H1 (cell line): ENCODE measurements at regions of chr20 and their contacts with region 1.

Region 1: DNA sequence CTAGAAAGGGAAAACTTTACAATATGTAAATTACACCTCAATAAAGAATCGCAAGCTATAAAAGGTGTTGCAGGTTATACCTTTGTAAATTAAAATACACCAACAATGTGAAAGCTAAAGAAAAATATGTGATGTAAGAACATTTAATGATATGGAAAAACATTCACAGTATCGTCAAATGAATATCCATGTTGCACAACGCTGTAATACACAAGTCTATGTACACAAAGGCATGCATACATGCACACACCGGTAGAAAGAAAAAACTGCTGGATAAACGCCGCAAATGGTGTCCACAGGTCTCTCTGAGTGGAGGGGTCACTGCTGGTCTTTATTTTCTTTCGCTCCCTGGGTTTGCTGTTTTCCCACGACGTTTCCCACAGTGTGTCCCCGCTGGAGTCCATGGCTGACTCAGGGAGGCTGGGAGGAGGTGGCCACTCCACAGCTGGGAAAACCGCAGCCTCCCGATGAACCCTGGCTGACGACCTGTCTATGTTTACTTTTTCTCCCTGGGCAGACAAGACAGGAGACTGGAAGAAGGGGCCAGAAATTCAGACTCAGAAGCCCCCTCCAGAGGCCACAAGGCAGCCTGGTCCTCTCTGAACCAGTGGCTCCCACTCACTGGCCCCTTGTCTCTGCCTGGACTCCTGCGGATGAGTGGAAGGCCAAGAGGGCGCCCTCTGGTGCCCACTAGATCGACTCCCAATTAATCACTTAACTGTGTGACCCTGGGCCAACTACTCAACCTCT is 12.9 kb upstream of the BPI start:
- DNase-seq: peak; percentile 49 to 74
- H3K4me3 ChIP-seq: no peak overlapping the region
- H3K27ac ChIP-seq: no peak overlapping the region
- H3K4me1 ChIP-seq: peaks cover 0 to 4% (median 3%) of the 10 kb centered on the region in 4 experiments; a peak in 3 of 7 replicates
- H3K27me3 ChIP-seq: no peaks in the 10 kb centered on the region
- CTCF ChIP-seq: peak; percentile 75 to 94 (median 85)
- EP300 ChIP-seq: no peak
- POLR2A ChIP-seq: no peak
- RAD21 ChIP-seq: peak; percentile 56 to 70

Region 2: GRCh38 chr20:38229376-38230252 is 61.4 kb before region 1 on chr20:
- CTCF ChIA-PET with region 1: interaction called, 14 read pairs
- POLR2A ChIA-PET with region 1: no interaction called
- DNase-seq: peak in 1 of 2 experiments; percentile 53
- H3K4me3 ChIP-seq: no peak overlapping the region
- H3K27ac ChIP-seq: no peak overlapping the region
- H3K4me1 ChIP-seq: no peaks in the 10 kb centered on the region
- H3K27me3 ChIP-seq: no peaks in the 10 kb centered on the region
- CTCF ChIP-seq: peak; percentile 50 to 54 (median 51)
- EP300 ChIP-seq: no peak
- POLR2A ChIP-seq: no peak
- RAD21 ChIP-seq: peak; percentile 43 to 57

Region 3: DNA sequence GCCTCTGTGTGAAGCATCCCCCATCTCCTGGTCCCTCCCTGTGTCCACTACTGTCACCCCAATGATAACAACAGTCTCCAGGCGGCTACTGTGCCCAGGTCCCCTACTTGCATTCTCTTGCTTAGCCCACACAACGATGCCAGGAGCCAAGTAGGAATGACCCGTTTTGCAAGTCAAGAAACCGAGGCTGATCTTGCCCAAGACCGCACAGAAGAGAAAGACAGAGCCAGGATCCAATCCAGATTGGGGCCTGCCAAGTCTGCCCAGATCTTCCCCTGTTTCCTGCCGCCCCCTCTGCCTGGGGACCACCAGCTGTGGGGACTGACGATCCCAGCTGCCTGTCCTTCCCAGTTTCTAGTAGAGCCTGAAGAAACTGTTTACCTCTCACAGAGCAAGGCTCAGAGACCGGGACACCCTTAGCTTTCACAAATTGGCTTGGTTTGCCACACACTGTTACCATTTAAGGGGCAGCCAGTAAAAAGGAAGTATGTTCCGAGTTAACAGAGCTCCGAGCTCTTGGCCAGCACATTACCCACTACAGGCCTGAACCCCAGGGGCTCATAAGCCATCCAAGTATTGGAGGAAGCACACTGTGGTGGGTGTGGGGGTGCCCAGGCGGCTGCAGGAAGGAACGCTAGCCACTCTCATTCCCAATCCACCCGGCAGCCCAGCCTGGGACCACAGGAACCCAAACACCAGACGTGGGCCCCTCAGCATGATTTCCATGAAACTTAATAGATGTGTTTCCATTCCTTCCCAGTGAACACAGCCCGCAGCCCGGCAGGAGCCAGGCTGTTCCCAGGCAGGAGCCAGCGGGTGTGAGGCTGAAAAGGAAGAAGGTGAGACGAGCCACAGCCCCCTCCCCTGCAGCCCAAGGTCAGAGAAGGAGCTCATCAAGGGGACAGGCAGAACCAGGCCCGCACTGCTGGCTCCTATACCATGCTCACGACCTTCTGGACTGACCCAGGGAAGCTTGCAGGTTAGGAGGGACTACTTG is 38.4 kb before region 1 on chr20:
- CTCF ChIA-PET with region 1: interaction called, 11 read pairs
- POLR2A ChIA-PET with region 1: interaction called, 3 read pairs
- DNase-seq: no peak
- H3K4me3 ChIP-seq: no peak overlapping the region
- H3K27ac ChIP-seq: no peak overlapping the region
- H3K4me1 ChIP-seq: peaks cover 0 to 10% (median 4%) of the 10 kb centered on the region in 4 experiments; a peak in 4 of 7 replicates
- H3K27me3 ChIP-seq: no peaks in the 10 kb centered on the region
- CTCF ChIP-seq: no peak
- EP300 ChIP-seq: no peak
- POLR2A ChIP-seq: no peak
- RAD21 ChIP-seq: no peak